ENCODE measurements at regions of chr3 and their contacts with region 1.

Region 1: DNA sequence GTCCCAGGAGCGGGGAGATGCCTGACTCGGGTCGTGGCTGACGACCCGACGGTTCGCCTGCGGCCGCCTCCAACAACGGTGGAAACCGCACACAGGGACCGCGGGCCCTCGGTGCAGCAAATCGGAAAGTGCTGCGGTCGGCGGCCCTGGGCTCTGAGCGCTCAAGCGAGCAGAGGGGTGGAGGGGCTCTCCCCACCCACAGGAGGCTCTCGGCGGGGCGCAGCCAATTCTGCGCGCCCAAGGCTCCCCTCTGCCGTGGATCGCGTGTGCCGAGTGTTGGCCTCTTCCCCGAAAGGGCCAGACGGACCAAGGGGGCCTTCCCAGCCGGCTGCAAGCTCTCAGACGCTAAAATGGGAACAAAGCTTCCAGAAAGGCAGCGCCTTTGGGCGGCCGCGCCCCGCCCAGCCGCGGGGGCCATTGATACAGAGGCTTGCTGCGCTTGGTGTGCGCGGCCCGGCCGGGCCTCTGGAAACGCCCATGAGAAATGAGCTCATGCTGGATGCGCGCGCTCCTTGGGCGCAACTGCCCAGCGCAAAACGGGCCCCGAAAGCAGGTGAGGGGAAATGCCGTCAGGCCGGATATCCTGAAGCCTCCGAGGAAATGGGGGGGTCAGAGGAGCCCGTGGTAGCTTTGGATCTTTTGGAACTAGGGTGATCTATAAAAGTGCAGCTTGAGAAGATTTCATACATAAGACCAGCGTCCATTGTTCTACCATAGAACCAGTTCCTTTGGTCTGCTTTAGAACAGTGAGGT is 1.2 kb upstream of the GSK3B start:
- DNase-seq: peak; percentile 70 to 96
- H3K4me3 ChIP-seq: peak overlapping the region; percentile 70 to 90
- H3K27ac ChIP-seq: peak overlapping the region; percentile 97 to 100
- H3K4me1 ChIP-seq: peaks cover 0 to 5% of the 10 kb centered on the region in 2 donors
- H3K27me3 ChIP-seq: no peaks in the 10 kb centered on the region
- CTCF ChIP-seq: no peak

Region 2: GRCh38 chr3:119676771-119677640 is 418.4 kb before region 1 on chr3 and contains the start of gene COX17:
- intact Hi-C with region 1: loop called (anchors 10 kb)
- DNase-seq: peak; percentile 80 to 97
- H3K4me3 ChIP-seq: peak within 1 kb of the TSS; percentile 56 to 80
- H3K27ac ChIP-seq: peak within 1 kb of the TSS; percentile 93
- H3K4me1 ChIP-seq: peaks cover 3 to 18% of the 10 kb centered on the region in 2 donors
- H3K27me3 ChIP-seq: no peaks in the 10 kb centered on the region
- CTCF ChIP-seq: no peak
- total RNA-seq, gene COX17: 12.5 TPM

Region 3: DNA sequence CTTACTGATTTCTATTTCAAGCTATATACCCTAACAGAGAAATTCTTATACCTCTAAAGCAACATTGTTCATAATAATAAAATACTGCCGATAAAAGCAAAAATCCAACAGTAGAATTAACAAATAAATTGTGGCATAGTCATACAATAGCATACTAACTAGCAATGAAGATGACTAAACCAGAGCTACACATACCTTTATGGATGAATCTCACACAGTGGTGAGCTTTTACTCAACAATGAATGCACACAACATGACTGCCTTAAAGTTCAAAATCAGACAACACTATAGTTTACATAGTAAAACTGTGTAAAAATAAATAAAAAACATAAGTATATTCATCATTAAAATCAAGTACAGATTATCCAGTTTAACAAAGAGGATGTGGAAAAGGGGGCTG is 214.4 kb before region 1 on chr3:
- intact Hi-C with region 1: no loop called
- DNase-seq: no peak
- H3K4me3 ChIP-seq: no peak overlapping the region
- H3K27ac ChIP-seq: no peak overlapping the region
- H3K4me1 ChIP-seq: no peaks in the 10 kb centered on the region
- H3K27me3 ChIP-seq: no peaks in the 10 kb centered on the region
- CTCF ChIP-seq: no peak

Region 4: DNA sequence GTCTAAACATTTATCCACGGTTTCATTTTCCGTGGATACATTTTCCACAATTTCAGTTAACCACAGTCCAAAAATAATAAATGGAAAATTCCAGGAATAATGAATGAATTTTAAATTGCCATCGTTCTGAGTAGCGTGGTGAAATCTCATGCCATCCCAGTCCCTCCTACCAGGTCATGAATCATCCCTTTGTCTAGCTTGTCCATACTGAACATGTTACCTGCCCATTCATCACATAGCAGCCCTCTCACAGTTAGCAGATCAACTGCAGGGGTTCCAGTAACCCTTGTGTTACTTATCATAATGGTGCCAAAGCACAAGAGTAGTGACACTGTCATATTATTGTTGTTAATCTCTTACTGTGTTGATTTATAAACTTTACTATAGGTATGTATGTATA is 125.6 kb before region 1 on chr3:
- intact Hi-C with region 1: no loop called
- DNase-seq: no peak
- H3K4me3 ChIP-seq: no peak overlapping the region
- H3K27ac ChIP-seq: no peak overlapping the region
- H3K4me1 ChIP-seq: peaks cover 0 to 4% of the 10 kb centered on the region in 2 donors
- H3K27me3 ChIP-seq: no peaks in the 10 kb centered on the region
- CTCF ChIP-seq: no peak

Region 5: GRCh38 chr3:120160050-120160449 is 64.6 kb after region 1 on chr3:
- intact Hi-C with region 1: loop called (anchors 1 kb)
- DNase-seq: peak; percentile 36 to 86
- H3K4me3 ChIP-seq: no peak overlapping the region
- H3K27ac ChIP-seq: peak overlapping the region in 1 of 2 donors; percentile 28
- H3K4me1 ChIP-seq: peaks cover 3% of the 10 kb centered on the region in 2 donors
- H3K27me3 ChIP-seq: no peaks in the 10 kb centered on the region
- CTCF ChIP-seq: no peak

Region 6: DNA sequence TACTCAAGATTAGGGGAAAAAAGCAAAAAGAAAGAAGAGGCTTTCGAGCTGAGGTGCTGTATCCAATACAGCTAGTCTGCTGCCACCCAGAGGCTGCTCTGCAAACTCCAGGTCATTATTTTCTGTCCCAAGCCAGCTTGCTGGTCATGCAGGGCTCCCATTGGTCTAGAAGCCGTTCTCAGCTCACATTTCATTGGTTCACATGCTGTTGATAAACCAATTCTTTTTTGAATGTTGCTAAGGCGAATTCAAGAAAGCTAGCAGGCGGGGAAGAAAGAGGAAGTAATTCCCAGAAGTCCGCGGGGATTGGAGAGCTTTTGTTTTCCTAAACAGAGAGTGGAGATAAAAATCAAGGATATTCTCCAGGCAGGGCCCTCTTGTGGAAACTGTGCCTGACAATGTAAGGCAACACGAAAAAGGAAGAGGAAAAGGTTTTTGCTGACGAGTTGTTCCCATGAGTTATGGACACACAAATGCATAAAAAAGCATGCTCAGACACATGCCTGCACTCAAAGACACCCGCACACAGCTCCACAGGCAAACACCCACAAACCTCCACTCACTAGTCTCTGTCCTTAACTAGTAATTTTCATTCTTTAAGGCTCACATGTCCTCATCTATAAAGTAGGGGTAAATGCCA is 322.0 kb after region 1 on chr3:
- intact Hi-C with region 1: loop called (anchors 5 kb)
- DNase-seq: peak; percentile 84 to 97
- H3K4me3 ChIP-seq: peak overlapping the region; percentile 38 to 53
- H3K27ac ChIP-seq: peak overlapping the region; percentile 56 to 80
- H3K4me1 ChIP-seq: peaks cover 42 to 52% of the 10 kb centered on the region in 2 donors
- H3K27me3 ChIP-seq: no peaks in the 10 kb centered on the region
- CTCF ChIP-seq: peak; percentile 69 to 88 (median 78)

Region 7: GRCh38 chr3:120742198-120742849 is 646.9 kb after region 1 on chr3 and contains the starts of genes GTF2E1 and RABL3:
- intact Hi-C with region 1: loop called (anchors 2 kb)
- DNase-seq: peak; percentile 96 to 99
- H3K4me3 ChIP-seq: peak within 1 kb of the TSS; percentile 87 to 97
- H3K27ac ChIP-seq: peak within 1 kb of the TSS; percentile 92 to 93
- H3K4me1 ChIP-seq: peaks cover 4 to 9% of the 10 kb centered on the region in 2 donors
- H3K27me3 ChIP-seq: no peaks in the 10 kb centered on the region
- CTCF ChIP-seq: no peak
- total RNA-seq, gene GTF2E1: 4.4 TPM
- total RNA-seq, gene RABL3: 3.0 TPM